PC-3 (cell line): ENCODE measurements at regions of chr3 and their contacts with region 1.

Region 1: DNA sequence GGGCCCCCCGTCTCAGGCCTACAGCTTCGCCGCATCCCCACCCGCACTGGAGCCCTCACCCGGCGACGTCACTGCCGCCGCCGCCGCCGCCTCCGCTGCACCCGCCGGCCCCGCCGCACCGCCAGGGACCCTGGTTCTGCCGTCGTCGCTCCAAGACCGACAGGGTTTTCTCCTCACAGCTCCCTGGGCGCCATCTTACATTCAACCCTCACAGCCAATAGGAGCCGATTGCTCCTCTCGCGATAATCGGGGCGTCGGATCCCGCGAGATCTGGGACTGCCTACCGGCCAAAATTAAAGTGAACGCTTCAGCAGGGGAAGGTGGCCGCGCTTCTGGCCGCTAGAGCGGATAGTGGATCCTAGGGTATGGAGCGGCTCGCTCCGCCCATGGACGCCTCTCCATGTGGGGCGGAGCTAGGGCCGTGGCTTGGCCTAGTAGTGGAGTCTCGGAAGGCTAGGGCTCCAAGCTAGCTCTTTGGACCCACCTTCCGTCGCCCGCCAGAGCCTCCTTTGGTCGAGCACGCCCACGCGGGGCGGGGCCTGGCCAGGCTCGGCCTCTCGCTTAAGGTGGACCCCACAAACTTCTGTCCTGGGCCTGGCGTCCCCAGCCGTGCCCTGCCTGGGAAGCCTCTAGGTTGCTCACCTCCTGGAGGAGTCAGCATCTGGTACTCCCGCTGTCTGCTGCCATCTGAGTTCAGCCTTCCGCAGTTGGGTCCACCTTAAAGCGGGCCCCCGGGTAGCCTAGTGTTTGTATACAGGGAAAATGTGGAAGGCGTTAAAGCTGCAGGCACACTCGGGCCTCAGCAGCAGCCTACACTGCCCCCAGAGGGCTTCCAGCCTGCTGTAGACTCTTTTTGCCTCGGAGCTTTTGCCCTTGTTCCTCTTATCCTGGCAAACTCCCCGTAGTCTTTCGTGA is at the start of gene QRICH1:
- DNase-seq: peak; percentile 99
- ATAC-seq: peak; percentile 84
- H3K4me3 ChIP-seq: peak within 1 kb of the TSS; percentile 90
- H3K27ac ChIP-seq: peak within 1 kb of the TSS; percentile 80
- H3K4me1 ChIP-seq: peaks cover 13% of the 10 kb centered on the region
- H3K27me3 ChIP-seq: no peaks in the 10 kb centered on the region
- CTCF ChIP-seq: peak; percentile 62
- total RNA-seq, gene QRICH1: 90.2 and 124 TPM in 2 replicates

Region 2: DNA sequence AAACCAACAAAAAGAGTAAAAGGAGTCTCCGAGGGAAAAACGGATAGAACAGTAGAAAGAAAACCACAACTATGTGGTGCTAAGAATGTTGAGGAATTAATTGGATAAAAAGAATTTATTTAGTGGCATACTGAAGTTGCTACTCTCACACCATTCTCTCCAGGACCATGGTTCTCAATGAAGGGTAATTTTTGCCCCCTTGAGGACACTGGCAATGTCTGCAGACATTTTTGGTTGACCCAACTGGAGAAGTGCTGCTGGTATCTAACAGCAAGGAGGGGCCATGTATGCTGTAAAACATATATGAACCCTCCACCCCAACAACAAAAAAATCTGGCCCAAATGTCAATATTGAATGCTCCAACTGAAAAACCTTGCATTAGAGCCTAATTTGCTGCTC is 1429.6 kb before region 1 on chr3:
- CTCF ChIA-PET with region 1: no interaction called
- POLR2A ChIA-PET with region 1: interaction called, 18 read pairs
- intact Hi-C with region 1: no loop called
- DNase-seq: peak; percentile 43
- ATAC-seq: no peak
- H3K4me3 ChIP-seq: no peak overlapping the region
- H3K27ac ChIP-seq: no peak overlapping the region
- H3K4me1 ChIP-seq: peaks cover 26% of the 10 kb centered on the region
- H3K27me3 ChIP-seq: no peaks in the 10 kb centered on the region
- CTCF ChIP-seq: peak; percentile 50; the same call in 1 of the 2 replicates

Region 3: GRCh38 chr3:48472915-48473616 is 621.0 kb before region 1 on chr3:
- CTCF ChIA-PET with region 1: no interaction called
- POLR2A ChIA-PET with region 1: no interaction called
- intact Hi-C with region 1: no loop called
- DNase-seq: peak; percentile 90
- ATAC-seq: peak; percentile 84
- H3K4me3 ChIP-seq: peak overlapping the region; percentile 79
- H3K27ac ChIP-seq: peak overlapping the region; percentile 92
- H3K4me1 ChIP-seq: peaks cover 20% of the 10 kb centered on the region
- H3K27me3 ChIP-seq: no peaks in the 10 kb centered on the region
- CTCF ChIP-seq: peak; percentile 59

Region 4: GRCh38 chr3:49007068-49007770 is 86.9 kb before region 1 on chr3 and contains the start of gene WDR6:
- CTCF ChIA-PET with region 1: interaction called, 3 read pairs
- POLR2A ChIA-PET with region 1: interaction called, 13 read pairs
- intact Hi-C with region 1: no loop called
- DNase-seq: peak; percentile 99
- ATAC-seq: peak; percentile 89
- H3K4me3 ChIP-seq: peak within 1 kb of the TSS; percentile 79
- H3K27ac ChIP-seq: peak within 1 kb of the TSS; percentile 89
- H3K4me1 ChIP-seq: peaks cover 17% of the 10 kb centered on the region
- H3K27me3 ChIP-seq: no peaks in the 10 kb centered on the region
- CTCF ChIP-seq: peak; percentile 55
- total RNA-seq, gene WDR6: 92.7 and 117 TPM in 2 replicates

Region 5: DNA sequence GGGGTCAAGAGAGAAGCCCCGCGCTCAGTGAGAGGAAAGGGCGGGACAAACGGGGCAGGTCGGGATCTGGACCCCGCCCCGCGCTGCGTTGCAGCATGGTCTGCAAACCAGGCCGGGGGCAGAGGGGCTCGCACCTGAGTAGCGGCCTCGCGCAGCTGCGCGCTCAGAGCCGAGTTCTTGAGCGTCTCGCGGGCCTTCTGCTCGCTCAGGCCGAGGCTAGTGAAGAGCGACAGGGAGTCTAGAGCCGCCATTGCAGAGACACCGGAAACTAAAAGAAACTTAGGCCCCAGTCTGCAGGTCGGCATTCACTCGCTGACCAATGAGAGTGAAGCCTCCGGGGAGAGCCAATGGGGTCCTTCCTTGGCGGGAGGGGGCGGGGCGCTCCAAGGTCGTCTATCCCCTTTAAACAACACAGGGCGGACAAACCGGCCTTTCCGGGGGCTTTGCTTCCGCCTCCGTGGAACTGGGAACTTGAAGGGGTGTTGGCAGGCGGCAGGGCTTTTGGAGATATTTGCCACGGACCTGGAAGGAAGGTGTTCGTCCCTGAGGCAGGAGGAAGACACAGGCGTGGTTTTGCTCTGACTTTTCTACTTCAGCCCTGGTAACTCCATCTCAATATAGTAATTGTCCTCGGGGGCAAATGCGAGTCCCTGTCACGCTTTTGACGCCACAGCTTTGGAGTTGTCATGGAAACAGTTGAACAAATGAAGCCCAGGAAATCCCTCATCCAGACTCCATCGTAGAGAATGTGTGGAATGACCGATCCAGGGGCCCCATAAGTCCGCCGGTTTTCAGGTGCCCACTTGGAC is 10.6 kb after region 1 on chr3 and contains the start of gene QARS1:
- CTCF ChIA-PET with region 1: interaction called, 3 read pairs
- POLR2A ChIA-PET with region 1: interaction called, 5 read pairs
- intact Hi-C with region 1: loop called (anchors 1 kb)
- DNase-seq: peak; percentile 90
- ATAC-seq: peak; percentile 98
- H3K4me3 ChIP-seq: peak within 1 kb of the TSS; percentile 91
- H3K27ac ChIP-seq: peak within 1 kb of the TSS; percentile 67
- H3K4me1 ChIP-seq: peaks cover 21% of the 10 kb centered on the region
- H3K27me3 ChIP-seq: no peaks in the 10 kb centered on the region
- CTCF ChIP-seq: no peak
- total RNA-seq, gene QARS1: 310 and 316 TPM in 2 replicates

Region 6: DNA sequence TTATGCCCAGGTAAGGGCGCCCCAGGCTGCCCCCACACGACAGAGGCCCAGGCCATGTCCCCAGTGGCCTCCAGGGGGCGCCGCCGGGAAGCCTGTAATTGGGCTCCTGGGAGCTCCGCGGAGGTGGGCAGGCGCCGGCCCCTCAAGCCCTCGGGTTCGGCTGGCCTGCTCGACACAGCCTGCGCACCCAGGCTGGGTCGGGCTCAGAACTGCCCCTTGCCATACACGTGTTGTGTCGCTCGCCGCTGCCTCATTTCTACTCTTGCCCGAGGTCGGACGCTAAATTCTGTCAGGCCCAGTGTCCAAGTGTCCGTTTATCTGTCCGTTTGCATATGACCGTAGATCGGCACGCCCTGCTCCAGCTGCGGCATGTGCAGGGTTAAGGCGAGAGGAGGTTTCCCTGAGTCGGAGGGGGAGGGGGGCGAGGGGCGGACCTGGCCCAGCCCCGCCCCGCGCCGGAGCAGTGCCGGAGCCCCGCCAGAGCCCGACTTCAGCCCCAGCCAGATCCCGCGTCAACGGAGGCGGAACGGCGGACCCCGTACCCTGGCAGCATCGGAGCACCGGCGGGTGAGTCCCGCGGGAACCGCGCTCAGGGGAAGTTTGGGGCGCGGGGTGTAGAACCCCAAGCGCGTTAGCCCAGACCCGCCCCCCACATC is 77.1 kb after region 1 on chr3 and contains the start of gene KLHDC8B:
- CTCF ChIA-PET with region 1: interaction called, 4 read pairs
- POLR2A ChIA-PET with region 1: no interaction called
- intact Hi-C with region 1: loop called (anchors 2 kb)
- DNase-seq: peak; percentile 81
- ATAC-seq: peak; percentile 91
- H3K4me3 ChIP-seq: peak within 1 kb of the TSS; percentile 74
- H3K27ac ChIP-seq: no peak within 1 kb of the TSS
- H3K4me1 ChIP-seq: peaks cover 18% of the 10 kb centered on the region
- H3K27me3 ChIP-seq: no peaks in the 10 kb centered on the region
- CTCF ChIP-seq: peak; percentile 97
- total RNA-seq, gene KLHDC8B: 24.3 and 34.4 TPM in 2 replicates

Region 7: DNA sequence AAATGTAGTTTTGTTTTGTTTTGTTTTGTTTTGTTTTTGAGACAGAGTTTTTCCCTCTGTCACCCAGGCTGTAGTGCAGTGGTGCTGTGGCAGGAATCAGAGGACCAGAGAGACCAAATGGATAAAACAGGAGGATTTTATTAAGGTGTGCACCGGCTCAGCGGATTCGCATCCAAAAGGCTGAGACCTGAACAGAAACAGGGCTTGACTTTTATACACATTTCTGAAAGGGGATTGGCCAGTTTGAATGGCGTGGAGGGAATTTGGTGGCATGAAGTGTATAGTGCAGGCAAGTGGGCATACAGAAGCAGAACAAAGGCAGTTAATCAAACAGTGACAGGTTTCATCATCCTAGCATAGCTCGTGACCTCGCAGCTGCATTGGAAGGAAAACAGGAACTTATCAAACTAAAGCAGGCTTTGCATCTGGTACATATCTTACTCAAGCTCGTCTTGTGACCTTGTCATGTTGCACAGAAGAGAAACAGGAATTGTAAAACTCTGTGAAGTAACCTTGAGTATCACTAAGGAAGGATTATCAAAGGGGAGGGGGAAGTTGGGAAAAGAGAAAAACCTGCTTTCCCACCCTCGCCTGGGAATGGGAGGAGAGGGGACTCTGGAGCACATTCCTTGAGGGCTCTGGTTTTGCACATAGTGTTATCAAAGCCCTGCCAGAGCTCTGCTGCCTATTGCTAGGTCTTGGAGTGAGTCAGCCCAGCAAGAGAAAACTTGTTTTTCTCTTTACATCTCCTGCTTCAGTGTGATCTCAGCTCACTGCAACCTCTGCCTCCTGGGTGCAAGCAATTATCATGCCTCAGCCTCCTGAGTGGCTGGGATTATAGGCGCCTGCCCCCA is 144.4 kb after region 1 on chr3:
- CTCF ChIA-PET with region 1: no interaction called
- POLR2A ChIA-PET with region 1: no interaction called
- intact Hi-C with region 1: no loop called
- DNase-seq: peak; percentile 23
- ATAC-seq: no peak
- H3K4me3 ChIP-seq: no peak overlapping the region
- H3K27ac ChIP-seq: peak overlapping the region; percentile 67
- H3K4me1 ChIP-seq: peaks cover 14% of the 10 kb centered on the region; the same call in 1 of the 2 replicates
- H3K27me3 ChIP-seq: no peaks in the 10 kb centered on the region
- CTCF ChIP-seq: no peak